Activated naive CD4-positive, alpha-beta T cell treated with anti-CD3 and anti-CD28 coated beads for 36 hours (primary cell): ENCODE measurements at regions of chr3 and their contacts with region 1.

Region 1: GRCh38 chr3:51682079-51682478 is 11.0 kb downstream of the TEX264 start:
- DNase-seq: peak; percentile 87
- H3K4me3 Mint-ChIP-seq: no peak overlapping the region
- H3K27ac Mint-ChIP-seq: peak overlapping the region; percentile 38
- H3K4me1 Mint-ChIP-seq: peaks cover 87% of the 10 kb centered on the region
- H3K27me3 Mint-ChIP-seq: no peaks in the 10 kb centered on the region

Region 2: DNA sequence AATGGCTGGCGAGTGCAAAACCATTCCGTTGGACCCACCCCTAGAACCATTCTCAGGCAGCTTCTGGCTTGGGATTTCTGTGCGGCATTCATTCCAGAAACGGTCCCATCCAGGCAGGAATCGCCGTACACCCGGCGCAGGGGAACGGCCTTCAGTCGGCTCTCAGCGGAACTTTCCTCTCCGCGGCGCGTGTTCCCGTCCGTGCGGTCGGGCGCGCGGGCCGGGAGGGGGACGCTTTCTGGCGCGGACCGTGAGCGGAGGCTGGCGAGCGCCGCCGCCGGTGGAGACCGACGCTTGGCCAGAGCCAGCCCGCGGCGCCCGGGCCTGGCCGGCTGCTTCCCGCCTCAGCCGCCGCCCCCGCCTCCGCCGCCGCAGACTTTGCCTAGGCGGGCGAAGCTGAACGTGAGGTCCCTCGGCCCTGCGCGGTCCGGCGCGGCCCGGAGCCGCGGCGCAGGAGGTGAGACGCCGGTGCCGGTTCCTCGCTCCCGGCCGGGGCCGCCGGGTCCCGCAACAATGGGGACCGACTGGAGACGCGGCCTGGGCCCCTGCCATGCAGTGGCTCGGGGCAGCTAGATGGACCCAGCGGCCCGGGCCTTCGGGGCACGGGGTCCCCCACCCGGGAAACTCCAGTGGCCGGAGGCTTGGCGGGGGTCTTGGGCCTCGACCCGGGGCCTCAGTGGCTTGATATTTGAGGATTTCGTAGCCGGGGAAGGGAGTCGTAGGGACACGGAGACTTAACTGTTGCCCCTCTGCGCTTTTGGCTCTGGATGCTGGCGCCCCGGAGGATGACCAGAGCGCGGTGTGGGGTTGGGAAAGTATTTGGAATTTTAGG is 143.4 kb before region 1 on chr3 and contains the start of gene RAD54L2:
- CTCF ChIA-PET with region 1: no interaction called
- intact Hi-C with region 1: loop called (anchors 1 kb)
- DNase-seq: peak; percentile 83
- H3K4me3 Mint-ChIP-seq: peak within 1 kb of the TSS; percentile 91
- H3K27ac Mint-ChIP-seq: peak within 1 kb of the TSS; percentile 89
- H3K4me1 Mint-ChIP-seq: peaks cover 34% of the 10 kb centered on the region
- H3K27me3 Mint-ChIP-seq: no peaks in the 10 kb centered on the region
- total RNA-seq, gene RAD54L2: 23.1 to 24.5 TPM

Region 3: GRCh38 chr3:51637941-51638471 is 44.1 kb before region 1 on chr3:
- CTCF ChIA-PET with region 1: interaction called, 9 read pairs
- intact Hi-C with region 1: loop called (anchors 1 kb)
- DNase-seq: peak; percentile 50
- H3K4me3 Mint-ChIP-seq: no peak overlapping the region
- H3K27ac Mint-ChIP-seq: no peak overlapping the region
- H3K4me1 Mint-ChIP-seq: no peaks in the 10 kb centered on the region
- H3K27me3 Mint-ChIP-seq: no peaks in the 10 kb centered on the region

Region 4: DNA sequence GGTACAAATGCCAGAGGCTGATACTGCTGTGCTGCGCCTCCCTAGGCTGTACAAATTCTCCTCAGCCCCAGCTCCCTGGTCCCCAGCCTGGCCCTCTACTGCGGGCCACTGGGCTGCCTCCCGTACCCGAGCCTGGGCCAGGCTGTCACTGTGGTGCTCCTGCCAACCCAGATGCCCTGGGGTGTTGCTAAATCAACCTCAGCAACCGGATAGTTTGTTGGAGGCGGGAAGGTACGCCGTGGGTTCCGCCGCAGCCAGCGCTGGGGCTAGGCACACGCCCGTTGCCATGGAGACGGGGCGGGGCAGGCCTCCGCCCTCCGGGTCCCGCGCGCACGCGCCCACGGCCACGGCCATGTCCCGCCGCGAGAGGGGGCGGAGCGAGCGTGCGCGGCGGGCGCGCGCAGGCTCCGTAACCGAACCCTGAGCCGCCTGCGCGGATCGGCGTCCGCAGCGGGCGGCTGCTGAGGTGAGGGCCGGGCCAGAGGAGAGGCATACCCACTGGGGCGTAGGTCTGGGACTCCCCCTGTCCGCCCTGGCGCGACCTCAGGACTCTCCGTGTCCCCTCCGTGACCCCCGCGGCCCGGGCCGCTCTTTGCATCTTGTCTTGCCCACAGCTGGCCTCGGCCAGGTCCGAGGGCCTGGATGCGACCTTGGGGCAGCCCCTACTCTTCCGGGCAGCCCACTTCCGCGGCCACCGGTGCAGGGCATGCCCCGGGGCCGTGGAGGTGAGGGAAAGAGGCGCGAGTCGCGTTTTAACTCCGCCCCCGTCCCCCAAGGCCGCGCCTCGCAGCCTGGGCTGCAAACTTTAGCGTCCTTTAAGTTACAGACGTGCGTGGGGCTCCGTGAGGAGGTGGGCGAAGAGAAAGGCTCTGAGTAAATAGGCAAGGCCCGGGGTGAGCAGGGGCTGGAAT is 11.0 kb before region 1 on chr3 and contains the start of gene TEX264:
- CTCF ChIA-PET with region 1: interaction called, 66 read pairs
- intact Hi-C with region 1: loop called (anchors 1 kb)
- DNase-seq: peak; percentile 85
- H3K4me3 Mint-ChIP-seq: peak within 1 kb of the TSS; percentile 85
- H3K27ac Mint-ChIP-seq: peak within 1 kb of the TSS; percentile 66
- H3K4me1 Mint-ChIP-seq: peaks cover 61% of the 10 kb centered on the region
- H3K27me3 Mint-ChIP-seq: no peaks in the 10 kb centered on the region
- total RNA-seq, gene TEX264: 23.7 to 26.6 TPM

Region 5: GRCh38 chr3:51799879-51800749 is 118.0 kb after region 1 on chr3:
- CTCF ChIA-PET with region 1: interaction called, 4 read pairs
- intact Hi-C with region 1: loop called (anchors 1 kb)
- DNase-seq: peak; percentile 35
- H3K4me3 Mint-ChIP-seq: no peak overlapping the region
- H3K27ac Mint-ChIP-seq: no peak overlapping the region
- H3K4me1 Mint-ChIP-seq: peaks cover 22% of the 10 kb centered on the region
- H3K27me3 Mint-ChIP-seq: peaks cover 5% of the 10 kb centered on the region

Region 6: GRCh38 chr3:52052831-52053306 is 370.8 kb after region 1 on chr3:
- CTCF ChIA-PET with region 1: no interaction called
- intact Hi-C with region 1: no loop called
- DNase-seq: peak; percentile 77
- H3K4me3 Mint-ChIP-seq: peak overlapping the region; percentile 88
- H3K27ac Mint-ChIP-seq: peak overlapping the region; percentile 96
- H3K4me1 Mint-ChIP-seq: peaks cover 52% of the 10 kb centered on the region
- H3K27me3 Mint-ChIP-seq: no peaks in the 10 kb centered on the region